ENCODE measurements at regions of chr5 and their contacts with region 1.

Region 1: DNA sequence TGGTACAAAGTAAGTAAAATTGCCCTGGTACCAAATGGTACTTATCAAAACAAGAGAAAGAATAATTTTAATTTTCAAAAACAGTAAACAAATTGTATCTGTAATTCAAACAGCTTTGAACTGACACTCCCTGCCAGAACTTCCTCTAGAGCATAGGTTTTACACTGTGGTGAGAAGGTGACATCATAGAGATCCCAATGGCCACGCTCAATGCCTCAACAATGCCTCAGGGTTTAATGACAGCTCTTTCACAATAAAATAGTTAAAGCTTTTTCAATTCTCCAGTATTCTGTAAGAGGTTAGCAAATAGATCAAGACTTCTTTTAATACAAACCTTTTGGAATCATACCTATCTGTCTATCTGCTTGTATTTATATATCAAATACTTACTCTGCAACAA is 437.1 kb downstream of the PRR16 start:
- DNase-seq: peak; percentile 39
- ATAC-seq: no peak
- H3K4me3 ChIP-seq: no peak overlapping the region
- H3K27ac ChIP-seq: no peak overlapping the region
- H3K4me1 ChIP-seq: no peaks in the 10 kb centered on the region
- H3K27me3 ChIP-seq: no peaks in the 10 kb centered on the region
- CTCF ChIP-seq: no peak

Region 2: DNA sequence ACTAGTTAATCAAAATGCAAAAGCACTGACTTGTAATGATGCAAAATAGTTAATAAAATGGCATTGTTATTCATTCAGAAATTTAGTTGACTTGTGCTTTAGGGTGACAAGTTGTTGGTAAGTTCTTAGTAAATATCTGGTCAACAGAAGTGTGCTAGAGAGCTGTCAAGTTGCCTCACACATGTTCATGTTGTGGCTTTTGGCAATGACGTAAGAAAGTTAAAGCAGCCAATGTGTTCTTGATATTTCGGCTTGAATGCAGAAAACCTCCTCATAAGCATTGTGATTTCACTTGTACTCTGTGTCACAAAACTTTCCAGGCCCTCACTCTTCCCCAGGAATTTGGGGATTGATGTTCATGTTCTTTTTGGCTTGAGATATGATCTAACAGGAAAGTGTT is 189.6 kb after region 1 on chr5:
- CTCF ChIA-PET with region 1: no interaction called
- POLR2A ChIA-PET with region 1: no interaction called
- intact Hi-C with region 1: loop called (anchors 10 kb)
- DNase-seq: no peak
- ATAC-seq: no peak
- H3K4me3 ChIP-seq: no peak overlapping the region
- H3K27ac ChIP-seq: no peak overlapping the region
- H3K4me1 ChIP-seq: no peaks in the 10 kb centered on the region
- H3K27me3 ChIP-seq: no peaks in the 10 kb centered on the region
- CTCF ChIP-seq: no peak

Measured in PC-3 (cell line).